ENCODE measurements at regions of chr11 and their contacts with region 1.

Region 1: DNA sequence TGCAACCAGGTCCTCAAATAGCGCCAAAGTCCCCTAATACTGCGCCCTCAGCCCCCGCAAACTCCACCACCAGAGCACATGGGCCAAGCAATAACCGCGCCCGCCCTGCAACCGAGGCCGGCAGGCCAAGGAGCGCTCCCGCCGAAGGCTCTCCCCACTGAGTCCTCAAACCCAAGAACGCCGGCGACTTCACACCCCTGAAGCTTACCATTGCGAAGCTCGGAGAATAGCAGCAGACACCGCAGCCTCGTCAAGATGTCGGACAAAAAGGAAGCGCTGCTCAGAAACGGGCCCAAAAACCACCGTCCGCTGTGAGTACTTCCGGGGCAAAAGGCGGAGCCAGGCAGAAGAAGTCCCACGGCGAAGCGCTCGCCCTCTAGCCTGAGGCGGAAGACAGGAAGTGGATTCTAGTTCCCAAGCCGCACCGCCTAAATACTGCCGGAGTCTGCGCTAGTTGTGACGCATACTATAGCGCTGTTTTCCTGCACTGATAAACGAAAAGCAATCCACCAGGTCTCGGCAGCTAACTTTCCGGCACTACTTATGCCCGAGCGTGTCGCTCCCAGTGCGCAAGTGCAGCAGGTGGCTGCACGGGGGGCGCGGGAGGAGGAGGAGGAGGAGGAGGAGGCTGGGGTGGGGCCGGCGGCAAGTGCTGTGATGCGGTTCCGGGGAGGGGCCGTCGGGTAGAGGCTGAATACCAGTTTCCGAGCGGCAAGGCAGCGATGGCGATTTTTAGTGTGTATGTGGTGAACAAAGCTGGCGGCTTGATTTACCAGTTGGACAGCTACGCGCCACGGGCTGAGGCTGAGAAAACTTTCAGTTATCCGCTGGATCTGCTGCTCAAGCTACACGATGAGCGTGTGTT is at the starts of genes RPS25 and TRAPPC4:
- DNase-seq: peak; percentile 96 to 98 (median 97)
- H3K4me3 ChIP-seq: peak within 1 kb of the TSS; percentile 71 to 96
- H3K4me3 Mint-ChIP-seq: peak within 1 kb of the TSS; percentile 94 to 100 (median 99)
- H3K27ac ChIP-seq: peak within 1 kb of the TSS; percentile 87
- H3K27ac Mint-ChIP-seq: peak within 1 kb of the TSS; percentile 98 to 100 (median 100)
- H3K4me1 ChIP-seq: peaks cover 52% of the 10 kb centered on the region
- H3K4me1 Mint-ChIP-seq: peaks cover 21 to 73% (median 51%) of the 10 kb centered on the region in 4 donors
- H3K27me3 ChIP-seq: no peaks in the 10 kb centered on the region
- H3K27me3 Mint-ChIP-seq: no peaks in the 10 kb centered on the region
- total RNA-seq, gene RPS25: 2,545 to 2,705 TPM
- total RNA-seq, gene TRAPPC4: 89.2 to 97.3 TPM

Region 2: GRCh38 chr11:119030329-119031049 is 12.2 kb after region 1 on chr11 and contains the start of gene SLC37A4:
- CTCF ChIA-PET with region 1: interaction called, 16 read pairs
- POLR2A ChIA-PET with region 1: interaction called, 135 read pairs
- intact Hi-C with region 1: loop called (anchors 1 kb)
- DNase-seq: peak; percentile 98 to 99 (median 99)
- H3K4me3 ChIP-seq: peak within 1 kb of the TSS; percentile 61 to 91
- H3K4me3 Mint-ChIP-seq: peak within 1 kb of the TSS; percentile 78 to 91 (median 82)
- H3K27ac ChIP-seq: peak within 1 kb of the TSS; percentile 76
- H3K27ac Mint-ChIP-seq: peak within 1 kb of the TSS; percentile 64 to 95 (median 93)
- H3K4me1 ChIP-seq: peaks cover 19% of the 10 kb centered on the region
- H3K4me1 Mint-ChIP-seq: peaks cover 14 to 40% (median 19%) of the 10 kb centered on the region in 4 donors
- H3K27me3 ChIP-seq: no peaks in the 10 kb centered on the region
- H3K27me3 Mint-ChIP-seq: no peaks in the 10 kb centered on the region
- total RNA-seq, gene SLC37A4: 14.6 to 14.8 TPM